A549 (cell line): ENCODE measurements at regions of chr17 and their contacts with region 1.

Region 1: DNA sequence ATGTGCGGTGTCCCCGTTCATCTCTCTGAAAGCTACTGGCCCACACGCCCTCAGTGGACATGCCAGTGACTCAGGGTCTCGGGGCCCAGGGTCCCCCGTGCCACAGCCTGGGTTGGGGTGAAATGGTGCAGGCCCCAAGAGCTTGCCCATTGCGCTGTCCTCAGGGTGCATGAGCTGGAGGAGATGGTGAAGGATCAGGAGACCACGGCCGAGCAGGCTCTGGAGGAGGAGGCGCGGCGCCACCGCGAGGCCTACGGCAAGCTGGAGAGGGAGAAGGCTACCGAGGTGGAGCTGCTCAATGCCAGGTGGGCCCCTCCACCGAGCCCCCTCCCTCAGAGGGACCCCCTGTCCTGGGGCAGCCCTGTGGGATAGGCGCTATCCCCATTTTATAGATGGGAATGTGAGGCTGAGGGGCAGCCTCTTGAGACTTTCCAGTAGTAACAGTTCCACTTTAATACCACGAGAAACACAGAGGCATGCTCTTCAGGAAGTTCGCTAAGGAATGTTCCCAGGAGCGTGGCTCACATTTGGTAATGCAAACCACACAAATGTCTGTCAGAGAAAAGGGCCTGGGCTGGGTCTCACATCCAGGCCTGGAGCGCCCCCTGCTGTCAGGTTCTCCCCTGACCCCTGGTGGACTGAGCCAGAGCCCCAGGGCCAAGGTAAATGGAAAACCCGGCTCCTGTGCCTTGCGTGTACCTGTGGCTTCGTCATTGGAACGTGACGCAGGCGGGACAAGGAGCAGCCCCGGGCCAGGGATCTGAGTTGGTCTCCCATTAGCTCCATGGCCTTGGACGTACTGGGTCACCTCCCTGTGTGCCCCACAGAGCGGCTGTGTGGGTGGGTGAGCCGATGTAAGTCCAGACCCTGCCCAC is 133.7 kb downstream of the RAB11FIP4 start:
- DNase-seq: peak; percentile 87 to 96
- ATAC-seq: peak; percentile 81 to 95
- H3K4me3 ChIP-seq: peak overlapping the region; percentile 39
- H3K27ac ChIP-seq: peak overlapping the region; percentile 34 to 62; a peak in 3 of 6 replicates
- H3K4me1 ChIP-seq: no peaks in the 10 kb centered on the region
- CTCF ChIP-seq: peak; percentile 97
- EP300 ChIP-seq: no peak
- POLR2A ChIP-seq: no peak
- RAD21 ChIP-seq: peak; percentile 97

Region 2: DNA sequence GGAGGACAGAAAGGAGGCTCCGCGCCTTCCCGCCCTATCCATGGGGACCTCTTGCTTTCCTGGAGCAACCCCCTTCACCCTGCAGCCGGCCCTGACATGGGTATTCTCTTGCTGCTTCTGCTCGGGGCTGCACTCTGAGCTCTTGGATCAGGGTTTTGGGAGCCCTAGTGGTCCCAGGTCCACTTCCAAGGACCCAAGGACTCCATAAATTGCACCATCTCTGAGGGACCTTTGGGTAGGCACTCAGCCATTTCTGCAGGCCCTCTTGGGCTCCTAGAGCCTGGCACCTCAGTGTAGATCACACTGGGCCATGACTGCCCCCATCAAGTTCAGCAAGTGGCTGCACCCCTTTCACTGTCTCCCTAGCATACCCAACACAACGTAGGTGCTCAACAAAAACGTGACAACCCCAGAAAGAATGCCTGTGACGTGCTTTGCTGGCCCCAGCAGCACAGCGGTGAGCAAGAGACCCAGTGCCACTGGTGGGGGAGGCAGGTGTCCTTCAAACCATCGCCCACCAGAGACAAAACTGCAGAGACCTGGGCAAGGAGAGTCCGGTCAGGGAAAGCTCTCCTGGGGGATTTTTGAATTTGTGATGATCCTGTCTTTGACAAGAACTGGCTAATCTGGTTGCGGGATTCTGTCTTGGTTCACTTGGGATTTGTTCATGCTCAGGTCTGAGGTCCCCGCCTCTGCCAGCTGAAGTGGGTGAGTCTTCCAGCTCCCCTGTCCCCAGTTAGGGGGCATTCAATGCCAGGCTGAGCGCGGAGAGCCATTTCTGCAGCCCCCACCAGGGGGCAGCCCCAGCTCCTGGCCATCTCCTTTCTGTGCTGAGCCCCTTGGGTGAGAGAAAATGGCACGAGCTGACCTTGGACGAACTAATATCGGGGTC is 136.1 kb before region 1 on chr17:
- CTCF ChIA-PET with region 1: interaction called, 197 read pairs
- POLR2A ChIA-PET with region 1: no interaction called
- DNase-seq: peak in 1 of 2 experiments; percentile 82
- ATAC-seq: peak; percentile 57 to 80
- H3K4me3 ChIP-seq: no peak overlapping the region
- H3K27ac ChIP-seq: no peak overlapping the region
- H3K4me1 ChIP-seq: no peaks in the 10 kb centered on the region
- CTCF ChIP-seq: peak; percentile 72
- EP300 ChIP-seq: no peak
- POLR2A ChIP-seq: no peak
- RAD21 ChIP-seq: peak; percentile 64 to 70

Region 3: GRCh38 chr17:31425282-31426040 is 99.7 kb before region 1 on chr17:
- CTCF ChIA-PET with region 1: interaction called, 28 read pairs
- POLR2A ChIA-PET with region 1: no interaction called
- DNase-seq: no peak
- ATAC-seq: peak in 1 of 2 experiments; percentile 19; a peak in 1 of 6 replicates
- H3K4me3 ChIP-seq: no peak overlapping the region
- H3K27ac ChIP-seq: no peak overlapping the region
- H3K4me1 ChIP-seq: no peaks in the 10 kb centered on the region
- CTCF ChIP-seq: no peak
- EP300 ChIP-seq: no peak
- POLR2A ChIP-seq: no peak
- RAD21 ChIP-seq: no peak

Region 4: GRCh38 chr17:31462261-31462660 is 62.9 kb before region 1 on chr17:
- CTCF ChIA-PET with region 1: interaction called, 490 read pairs
- POLR2A ChIA-PET with region 1: no interaction called
- DNase-seq: no peak
- ATAC-seq: no peak
- H3K4me3 ChIP-seq: no peak overlapping the region
- H3K27ac ChIP-seq: no peak overlapping the region
- H3K4me1 ChIP-seq: no peaks in the 10 kb centered on the region
- CTCF ChIP-seq: no peak
- EP300 ChIP-seq: no peak
- POLR2A ChIP-seq: no peak
- RAD21 ChIP-seq: no peak

Region 5: DNA sequence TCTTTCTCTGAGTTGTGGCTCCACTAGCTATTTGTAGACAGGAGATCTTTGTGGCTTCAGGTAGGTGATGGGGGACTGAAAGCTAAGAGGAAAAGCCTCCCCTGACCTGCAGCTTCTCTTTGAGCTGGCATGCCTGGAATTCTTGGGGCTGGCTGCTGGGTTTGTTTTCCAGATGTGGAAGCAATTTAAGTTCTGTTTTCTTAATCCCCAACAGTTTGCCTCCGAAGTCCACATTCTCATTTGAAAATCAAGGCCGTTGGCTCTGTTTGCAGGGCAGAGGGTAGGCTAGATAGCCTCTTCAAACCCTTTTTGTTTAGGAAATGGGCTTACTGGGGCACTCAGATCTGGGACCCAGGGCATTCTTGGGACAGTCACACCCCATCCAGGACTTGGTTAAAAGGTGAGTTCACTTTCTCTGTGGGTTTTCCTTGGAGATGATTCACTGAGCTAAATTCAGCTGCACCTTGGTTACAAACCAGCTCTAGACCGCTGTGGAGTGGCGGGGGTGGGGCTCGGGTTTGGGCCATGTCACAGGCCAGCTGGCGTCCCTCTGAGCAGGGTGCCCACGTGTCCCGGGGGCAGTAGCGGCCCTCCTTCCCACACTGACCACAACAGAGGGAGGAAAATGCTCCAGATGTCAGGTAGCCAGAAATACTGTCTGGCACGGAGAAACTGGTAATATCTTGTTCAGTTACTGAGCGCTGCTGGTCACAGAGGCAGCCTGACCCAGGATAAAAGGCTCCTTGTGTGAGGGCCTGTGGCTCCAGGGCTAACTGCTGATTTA is 25.2 kb before region 1 on chr17:
- CTCF ChIA-PET with region 1: interaction called, 19 read pairs
- POLR2A ChIA-PET with region 1: no interaction called
- DNase-seq: no peak
- ATAC-seq: no peak
- H3K4me3 ChIP-seq: no peak overlapping the region
- H3K27ac ChIP-seq: no peak overlapping the region
- H3K4me1 ChIP-seq: no peaks in the 10 kb centered on the region
- CTCF ChIP-seq: no peak
- EP300 ChIP-seq: no peak
- POLR2A ChIP-seq: no peak
- RAD21 ChIP-seq: no peak

Region 6: GRCh38 chr17:31593806-31594205 is 68.6 kb after region 1 on chr17:
- CTCF ChIA-PET with region 1: no interaction called
- POLR2A ChIA-PET with region 1: no interaction called
- DNase-seq: no peak
- ATAC-seq: no peak
- H3K4me3 ChIP-seq: no peak overlapping the region
- H3K27ac ChIP-seq: no peak overlapping the region
- H3K4me1 ChIP-seq: peaks cover 28% of the 10 kb centered on the region
- CTCF ChIP-seq: no peak
- EP300 ChIP-seq: no peak
- POLR2A ChIP-seq: no peak
- RAD21 ChIP-seq: no peak

Region 7: GRCh38 chr17:32185875-32186274 is 660.7 kb after region 1 on chr17:
- CTCF ChIA-PET with region 1: no interaction called
- POLR2A ChIA-PET with region 1: no interaction called
- DNase-seq: no peak
- ATAC-seq: no peak
- H3K4me3 ChIP-seq: no peak overlapping the region
- H3K27ac ChIP-seq: peak overlapping the region in 1 of 2 experiments; percentile 20; a peak in 1 of 6 replicates
- H3K4me1 ChIP-seq: peaks cover 19% of the 10 kb centered on the region
- CTCF ChIP-seq: no peak
- EP300 ChIP-seq: no peak
- POLR2A ChIP-seq: no peak
- RAD21 ChIP-seq: no peak